ENCODE measurements at regions of chr1 and their contacts with region 1.

Region 1: GRCh38 chr1:16187748-16188401 is 24.6 kb downstream of the ARHGEF19 start:
- DNase-seq: peak; percentile 81
- ATAC-seq: peak; percentile 74 to 81
- H3K4me3 ChIP-seq: no peak overlapping the region
- H3K27ac ChIP-seq: no peak overlapping the region
- H3K4me1 ChIP-seq: peaks cover 18% of the 10 kb centered on the region
- H3K27me3 ChIP-seq: peaks cover 4% of the 10 kb centered on the region
- CTCF ChIP-seq: peak; percentile 95

Region 2: DNA sequence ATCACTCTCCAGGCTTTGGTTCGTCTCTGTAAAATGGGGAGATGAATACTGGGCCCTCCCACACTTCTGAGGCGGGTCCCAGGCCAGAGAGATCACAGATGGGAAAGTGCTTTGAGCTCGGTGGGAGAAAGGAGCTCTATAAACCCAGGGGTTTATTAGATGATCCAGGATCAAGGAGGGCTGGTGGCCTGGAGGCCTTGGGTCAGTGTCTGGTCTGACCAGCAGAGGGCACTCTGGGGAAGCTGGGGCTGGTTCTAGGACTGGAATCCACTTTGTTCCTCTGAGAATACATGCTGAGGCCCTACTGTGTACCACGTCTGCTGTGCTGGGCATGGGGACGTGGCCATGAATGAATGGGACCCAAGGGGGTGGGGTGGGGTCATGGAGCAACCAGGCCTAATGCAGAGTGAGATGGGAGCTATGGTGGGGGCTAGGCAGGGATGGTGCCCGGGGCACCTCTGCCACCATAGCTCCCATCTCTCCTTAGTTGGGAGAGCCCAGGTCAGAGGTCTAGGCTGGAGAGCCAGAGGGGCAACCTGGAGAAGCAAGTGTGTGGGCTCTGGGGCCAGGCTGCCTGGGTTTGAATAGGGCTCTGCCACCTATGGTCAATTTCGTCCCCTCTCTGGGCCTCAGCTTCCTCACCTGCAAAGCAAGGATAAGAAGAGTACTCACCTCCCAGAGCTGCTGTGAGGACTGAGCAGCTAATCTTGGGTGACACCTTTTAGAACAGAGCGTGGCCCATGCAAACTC is 105.4 kb before region 1 on chr1:
- intact Hi-C with region 1: loop called (anchors 5 kb)
- DNase-seq: peak; percentile 76
- ATAC-seq: peak; percentile 73 to 82
- H3K4me3 ChIP-seq: no peak overlapping the region
- H3K27ac ChIP-seq: no peak overlapping the region
- H3K4me1 ChIP-seq: peaks cover 8% of the 10 kb centered on the region
- H3K27me3 ChIP-seq: no peaks in the 10 kb centered on the region
- CTCF ChIP-seq: peak; percentile 91